Posterior cingulate gyrus (tissue), 11 donors: ENCODE measurements at regions of chr17 and their contacts with region 1.

Region 1: DNA sequence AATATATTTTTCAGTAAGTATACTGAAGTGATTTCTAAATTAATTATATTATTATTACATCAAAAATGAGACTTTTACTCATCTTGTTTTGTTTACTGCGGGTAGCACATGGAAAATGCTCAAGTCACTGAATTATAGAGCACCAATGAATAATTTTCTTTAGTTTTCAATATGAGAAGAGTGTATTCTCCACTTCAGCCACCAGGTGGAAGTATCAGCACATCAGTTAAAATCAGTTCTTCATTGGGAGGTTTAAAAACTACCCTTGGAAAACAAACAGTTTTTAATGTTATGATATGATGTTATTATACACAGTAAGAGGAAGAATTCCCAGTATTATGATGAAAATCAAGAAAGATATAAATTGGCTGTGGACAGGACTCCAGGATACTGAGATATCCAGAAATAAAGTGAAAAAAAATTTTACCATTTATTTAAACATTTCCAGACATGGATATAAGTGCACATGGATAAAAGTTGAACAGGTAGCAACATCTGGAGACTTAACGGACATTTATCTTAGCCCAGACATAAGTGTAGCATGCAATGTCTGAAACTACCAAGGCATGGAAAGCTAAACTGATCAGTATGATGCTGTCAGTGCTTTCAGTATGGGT is 467.3 kb downstream of the KCNJ2 start:
- DNase-seq: no peak

Region 2: GRCh38 chr17:70716551-70716950 is 79.9 kb after region 1 on chr17:
- intact Hi-C with region 1: loop called (anchors 2 kb)
- DNase-seq: no peak

Region 3: GRCh38 chr17:70767102-70767701 is 130.6 kb after region 1 on chr17:
- intact Hi-C with region 1: no loop called
- DNase-seq: no peak